ENCODE measurements at regions of chr10 and their contacts with region 1.

Region 1: DNA sequence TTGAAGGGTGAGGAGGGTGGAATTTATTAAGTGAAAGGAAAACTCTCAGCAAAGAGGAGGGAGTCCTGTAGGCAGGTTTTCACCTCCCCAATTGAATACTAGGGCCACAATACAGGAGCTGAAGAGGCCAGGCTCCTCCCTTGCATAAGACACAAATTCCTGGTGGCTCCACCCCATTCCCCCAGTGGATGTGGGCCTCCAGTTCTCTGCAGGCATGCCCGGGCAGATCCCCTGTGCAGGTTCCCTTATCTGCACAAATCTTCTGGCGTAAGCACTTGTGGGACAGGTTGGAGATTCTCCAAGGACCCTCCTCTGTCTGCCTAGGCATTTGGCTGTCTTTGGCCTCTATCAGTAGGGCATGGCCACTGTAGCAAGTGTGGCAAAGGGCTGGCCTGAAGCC is 847.1 kb upstream of the MBL2 start:
- DNase-seq: no peak
- H3K4me3 ChIP-seq: no peak overlapping the region
- H3K27ac ChIP-seq: no peak overlapping the region
- H3K4me1 ChIP-seq: no peaks in the 10 kb centered on the region
- H3K27me3 ChIP-seq: no peaks in the 10 kb centered on the region
- CTCF ChIP-seq: no peak
- POLR2A ChIP-seq: no peak

Region 2: GRCh38 chr10:53808677-53809372 is 189.2 kb after region 1 on chr10:
- intact Hi-C with region 1: loop called (anchors 10 kb)
- DNase-seq: no peak
- H3K4me3 ChIP-seq: no peak overlapping the region
- H3K27ac ChIP-seq: no peak overlapping the region
- H3K4me1 ChIP-seq: no peaks in the 10 kb centered on the region
- H3K27me3 ChIP-seq: no peaks in the 10 kb centered on the region
- CTCF ChIP-seq: no peak
- POLR2A ChIP-seq: no peak

Measured in breast epithelium (tissue), 4 donors.